Naive thymus-derived CD4-positive, alpha-beta T cell (primary cell): ENCODE measurements at regions of chr20 and their contacts with region 1.

Region 1: DNA sequence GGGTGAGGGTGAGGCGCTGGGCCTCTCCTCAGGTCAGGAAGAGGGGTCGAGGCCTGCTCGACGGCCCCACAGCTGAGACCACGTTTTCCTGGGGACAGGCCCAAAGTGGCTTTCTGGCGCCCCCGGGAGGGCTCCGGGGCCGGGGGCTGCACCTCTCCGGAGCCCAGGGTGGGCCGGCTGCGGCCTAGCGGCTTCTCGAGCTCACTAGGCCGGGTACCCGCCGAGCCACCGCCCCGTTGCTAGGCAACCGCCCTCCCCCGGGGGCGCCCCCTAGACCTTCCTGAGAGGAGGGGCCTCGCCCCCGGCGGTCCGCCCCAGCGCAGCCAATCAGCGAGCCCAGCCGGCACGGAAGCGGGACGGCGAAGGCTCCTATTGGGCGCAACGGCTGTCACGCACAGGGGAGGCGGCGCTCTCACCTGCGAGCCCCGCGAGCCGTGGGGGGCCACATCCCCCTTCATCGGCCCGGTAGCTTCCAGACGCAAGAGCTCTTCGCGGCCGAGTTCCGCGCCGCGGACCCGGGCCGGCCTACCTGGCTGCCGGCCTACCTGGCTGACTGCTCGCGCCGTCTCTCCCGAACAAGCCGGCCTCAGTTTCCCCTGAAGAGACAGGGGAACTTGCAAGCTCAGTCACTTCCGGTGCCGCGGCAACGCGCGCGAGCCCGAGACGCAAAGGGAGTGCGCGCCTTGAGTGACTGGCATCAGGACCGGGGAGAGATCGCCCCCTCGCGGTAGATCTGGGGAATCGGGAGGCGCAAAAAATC is 831 bp upstream of the BCL2L1 start:
- DNase-seq: peak; percentile 97 to 99 (median 98)
- ATAC-seq: peak; percentile 95
- H3K4me3 ChIP-seq: peak overlapping the region; percentile 92
- H3K4me3 Mint-ChIP-seq: peak overlapping the region; percentile 89 to 97 (median 96)
- H3K27ac ChIP-seq: peak overlapping the region; percentile 98
- H3K27ac Mint-ChIP-seq: peak overlapping the region; percentile 48 to 97 (median 94)
- H3K4me1 ChIP-seq: peaks cover 14 to 32% of the 10 kb centered on the region in 2 donors
- H3K4me1 Mint-ChIP-seq: peaks cover 27 to 44% (median 38%) of the 10 kb centered on the region in 7 donors
- H3K27me3 ChIP-seq: no peaks in the 10 kb centered on the region
- H3K27me3 Mint-ChIP-seq: no peaks in the 10 kb centered on the region

Region 2: DNA sequence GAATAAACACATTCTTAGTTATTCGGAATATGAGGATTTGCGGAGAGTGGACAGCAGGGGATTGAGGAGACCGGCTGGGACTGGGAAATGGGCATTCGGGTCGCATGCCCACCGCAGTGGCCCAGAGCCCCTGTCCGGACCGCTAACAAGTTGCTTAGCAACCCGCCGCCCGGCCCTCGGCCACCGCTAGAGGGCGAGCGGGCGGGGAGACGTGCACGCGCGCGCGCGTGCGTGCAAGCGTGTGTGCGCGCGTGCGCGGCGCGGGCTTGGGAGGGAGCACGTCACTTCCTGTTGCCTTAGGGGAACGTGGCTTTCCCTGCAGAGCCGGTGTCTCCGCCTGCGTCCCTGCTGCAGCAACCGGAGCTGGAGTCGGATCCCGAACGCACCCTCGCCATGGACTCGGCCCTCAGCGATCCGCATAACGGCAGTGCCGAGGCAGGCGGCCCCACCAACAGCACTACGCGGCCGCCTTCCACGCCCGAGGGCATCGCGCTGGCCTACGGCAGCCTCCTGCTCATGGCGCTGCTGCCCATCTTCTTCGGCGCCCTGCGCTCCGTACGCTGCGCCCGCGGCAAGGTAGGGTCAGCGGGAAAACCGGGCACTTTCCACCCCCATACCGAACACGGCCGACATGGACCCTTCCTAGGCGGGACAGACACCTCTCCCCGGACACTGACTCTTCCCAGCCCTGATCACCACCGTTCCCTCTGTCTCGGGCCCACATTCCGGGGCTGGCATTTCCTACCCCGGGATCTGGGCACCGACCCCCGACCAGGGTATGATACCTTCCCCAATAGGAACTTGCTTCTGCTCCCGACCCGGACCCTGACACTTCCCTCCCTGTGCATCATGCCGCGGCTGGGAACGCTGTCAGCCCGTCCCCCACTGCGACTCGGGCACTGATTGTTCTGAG is 209.1 kb before region 1 on chr20 and contains the start of gene HM13:
- CTCF ChIA-PET with region 1: no interaction called
- POLR2A ChIA-PET with region 1: no interaction called
- intact Hi-C with region 1: loop called (anchors 1 to 2 kb)
- DNase-seq: peak; percentile 79 to 89 (median 88)
- ATAC-seq: peak; percentile 96
- H3K4me3 ChIP-seq: peak within 1 kb of the TSS; percentile 90
- H3K4me3 Mint-ChIP-seq: peak within 1 kb of the TSS in 3 of 10 donors; percentile 48 to 77 (median 75)
- H3K27ac ChIP-seq: peak within 1 kb of the TSS; percentile 83
- H3K27ac Mint-ChIP-seq: peak within 1 kb of the TSS in 4 of 9 donors; percentile 80 to 92 (median 87)
- H3K4me1 ChIP-seq: peaks cover 26% of the 10 kb centered on the region in 2 donors
- H3K4me1 Mint-ChIP-seq: peaks cover 5 to 13% (median 9%) of the 10 kb centered on the region in 7 donors
- H3K27me3 ChIP-seq: no peaks in the 10 kb centered on the region
- H3K27me3 Mint-ChIP-seq: peaks cover 0 to under 1% (median 0%) of the 10 kb centered on the region in 5 donors
- total RNA-seq, gene HM13: 102 to 197 (median 133) TPM

Region 3: DNA sequence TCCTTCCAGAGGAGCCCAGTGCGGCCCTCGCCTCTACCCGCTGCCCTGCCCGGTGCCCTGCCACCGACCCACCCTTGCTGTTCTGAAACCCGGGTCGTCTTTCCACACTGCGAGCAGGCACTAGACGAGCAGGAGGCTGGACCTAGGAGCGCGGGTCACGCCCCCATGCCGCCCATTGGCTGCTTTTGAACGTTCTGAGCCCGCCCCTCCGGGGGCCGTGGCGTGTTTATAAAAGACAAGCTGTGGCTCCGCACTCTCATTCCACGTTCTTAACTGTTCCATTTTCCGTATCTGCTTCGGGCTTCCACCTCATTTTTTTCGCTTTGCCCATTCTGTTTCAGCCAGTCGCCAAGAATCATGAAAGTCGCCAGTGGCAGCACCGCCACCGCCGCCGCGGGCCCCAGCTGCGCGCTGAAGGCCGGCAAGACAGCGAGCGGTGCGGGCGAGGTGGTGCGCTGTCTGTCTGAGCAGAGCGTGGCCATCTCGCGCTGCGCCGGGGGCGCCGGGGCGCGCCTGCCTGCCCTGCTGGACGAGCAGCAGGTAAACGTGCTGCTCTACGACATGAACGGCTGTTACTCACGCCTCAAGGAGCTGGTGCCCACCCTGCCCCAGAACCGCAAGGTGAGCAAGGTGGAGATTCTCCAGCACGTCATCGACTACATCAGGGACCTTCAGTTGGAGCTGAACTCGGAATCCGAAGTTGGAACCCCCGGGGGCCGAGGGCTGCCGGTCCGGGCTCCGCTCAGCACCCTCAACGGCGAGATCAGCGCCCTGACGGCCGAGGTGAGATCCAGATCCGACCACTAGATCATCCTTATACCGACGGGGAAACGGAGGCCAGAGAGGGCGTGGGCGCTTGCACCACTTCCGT is 118.2 kb before region 1 on chr20 and contains the start of gene ID1:
- CTCF ChIA-PET with region 1: no interaction called
- POLR2A ChIA-PET with region 1: no interaction called
- intact Hi-C with region 1: loop called (anchors 1 kb)
- DNase-seq: peak; percentile 76 to 88 (median 86)
- ATAC-seq: peak; percentile 95
- H3K4me3 ChIP-seq: peak within 1 kb of the TSS; percentile 97
- H3K4me3 Mint-ChIP-seq: peak within 1 kb of the TSS; percentile 85 to 97 (median 96)
- H3K27ac ChIP-seq: peak within 1 kb of the TSS; percentile 42
- H3K27ac Mint-ChIP-seq: peak within 1 kb of the TSS in 8 of 9 donors; percentile 30 to 88 (median 71)
- H3K4me1 ChIP-seq: peaks cover 5 to 27% of the 10 kb centered on the region in 2 donors
- H3K4me1 Mint-ChIP-seq: peaks cover 7 to 29% (median 17%) of the 10 kb centered on the region in 7 donors
- H3K27me3 ChIP-seq: peaks cover 0 to 11% of the 10 kb centered on the region in 2 donors
- H3K27me3 Mint-ChIP-seq: peaks cover 24 to 62% (median 33%) of the 10 kb centered on the region in 5 donors
- total RNA-seq, gene ID1: 0.41 to 16.9 (median 0.62) TPM

Region 4: GRCh38 chr20:31661625-31662371 is 61.7 kb before region 1 on chr20:
- CTCF ChIA-PET with region 1: interaction called, 108 read pairs
- POLR2A ChIA-PET with region 1: interaction called, 85 read pairs
- intact Hi-C with region 1: loop called (anchors 1 kb)
- DNase-seq: peak; percentile 48 to 81 (median 73)
- ATAC-seq: peak; percentile 97
- H3K4me3 ChIP-seq: peak overlapping the region; percentile 54
- H3K4me3 Mint-ChIP-seq: peak overlapping the region; percentile 61 to 89 (median 83)
- H3K27ac ChIP-seq: peak overlapping the region; percentile 69
- H3K27ac Mint-ChIP-seq: peak overlapping the region; percentile 66 to 91 (median 86)
- H3K4me1 ChIP-seq: peaks cover 4 to 17% of the 10 kb centered on the region in 2 donors
- H3K4me1 Mint-ChIP-seq: peaks cover 20 to 50% (median 32%) of the 10 kb centered on the region in 7 donors
- H3K27me3 ChIP-seq: no peaks in the 10 kb centered on the region
- H3K27me3 Mint-ChIP-seq: no peaks in the 10 kb centered on the region

Region 5: DNA sequence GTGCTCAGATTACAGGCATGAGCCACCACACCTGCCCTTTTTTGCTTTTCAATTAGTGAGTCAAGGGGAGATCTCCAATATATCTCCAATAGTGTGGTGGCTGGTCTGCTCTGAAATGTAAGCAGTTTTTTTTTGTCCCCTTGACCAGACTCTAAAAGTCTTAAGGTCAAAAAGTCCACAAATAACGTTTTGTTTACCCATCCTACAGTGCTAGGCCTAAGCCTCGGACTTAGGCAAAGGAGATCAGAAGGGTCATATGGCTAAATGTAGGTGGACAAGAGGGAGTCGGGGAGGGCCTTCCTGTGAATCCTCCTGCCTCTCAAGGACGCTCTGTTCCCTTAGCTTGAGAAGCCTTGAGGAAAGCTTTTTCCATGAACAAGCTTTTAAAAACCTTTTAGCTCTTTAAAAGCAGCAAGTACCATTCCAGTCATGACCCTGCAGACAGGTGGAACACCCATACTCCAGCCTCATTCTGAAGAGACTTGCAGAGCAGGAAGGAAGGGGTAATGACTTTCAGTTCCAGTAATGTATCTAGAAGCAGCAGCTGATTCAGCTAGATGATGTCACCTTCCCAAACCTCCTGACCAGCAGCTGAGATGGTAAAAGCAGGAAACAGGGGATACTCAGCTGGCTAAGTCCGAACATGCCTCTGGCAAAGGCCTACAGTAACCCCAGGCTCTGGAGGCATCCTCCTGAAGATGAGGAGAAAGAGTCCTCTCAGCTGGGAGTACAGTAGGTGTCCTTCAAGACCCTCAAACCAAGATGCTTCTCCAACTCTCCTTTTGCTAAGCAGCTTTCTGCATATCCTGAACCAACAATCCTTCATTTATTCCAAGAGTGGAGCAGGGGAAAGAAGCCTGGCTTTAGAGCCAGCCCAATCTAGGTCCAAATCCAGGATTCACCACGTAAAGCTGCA is 24.4 kb before region 1 on chr20:
- CTCF ChIA-PET with region 1: interaction called, 7 read pairs
- POLR2A ChIA-PET with region 1: no interaction called
- intact Hi-C with region 1: loop called (anchors 2 kb)
- DNase-seq: no peak
- ATAC-seq: peak; percentile 80
- H3K4me3 ChIP-seq: no peak overlapping the region
- H3K4me3 Mint-ChIP-seq: peak overlapping the region in 1 of 10 donors; percentile 82
- H3K27ac ChIP-seq: peak overlapping the region; percentile 33
- H3K27ac Mint-ChIP-seq: peak overlapping the region; percentile 39 to 91 (median 73)
- H3K4me1 ChIP-seq: peaks cover 15 to 18% of the 10 kb centered on the region in 2 donors
- H3K4me1 Mint-ChIP-seq: peaks cover 40 to 61% (median 51%) of the 10 kb centered on the region in 7 donors
- H3K27me3 ChIP-seq: no peaks in the 10 kb centered on the region
- H3K27me3 Mint-ChIP-seq: no peaks in the 10 kb centered on the region

Region 6: GRCh38 chr20:31738729-31739561 is 15.4 kb after region 1 on chr20 and contains the start of gene TPX2:
- CTCF ChIA-PET with region 1: interaction called, 7 read pairs
- POLR2A ChIA-PET with region 1: interaction called, 19 read pairs
- intact Hi-C with region 1: loop called (anchors 1 kb)
- DNase-seq: peak; percentile 41 to 80 (median 75)
- ATAC-seq: peak; percentile 97
- H3K4me3 ChIP-seq: peak within 1 kb of the TSS; percentile 81
- H3K4me3 Mint-ChIP-seq: no peak within 1 kb of the TSS
- H3K27ac ChIP-seq: peak within 1 kb of the TSS; percentile 62
- H3K27ac Mint-ChIP-seq: peak within 1 kb of the TSS in 1 of 9 donors; percentile 10
- H3K4me1 ChIP-seq: peaks cover 0 to 8% of the 10 kb centered on the region in 2 donors
- H3K4me1 Mint-ChIP-seq: peaks cover 0 to 7% (median 0%) of the 10 kb centered on the region in 7 donors
- H3K27me3 ChIP-seq: no peaks in the 10 kb centered on the region
- H3K27me3 Mint-ChIP-seq: peaks cover 0 to 15% (median 0%) of the 10 kb centered on the region in 5 donors
- total RNA-seq, gene TPX2: 0.16 to 84.3 (median 0.43) TPM